ENCODE measurements at regions of chr6 and their contacts with region 1.

Region 1: DNA sequence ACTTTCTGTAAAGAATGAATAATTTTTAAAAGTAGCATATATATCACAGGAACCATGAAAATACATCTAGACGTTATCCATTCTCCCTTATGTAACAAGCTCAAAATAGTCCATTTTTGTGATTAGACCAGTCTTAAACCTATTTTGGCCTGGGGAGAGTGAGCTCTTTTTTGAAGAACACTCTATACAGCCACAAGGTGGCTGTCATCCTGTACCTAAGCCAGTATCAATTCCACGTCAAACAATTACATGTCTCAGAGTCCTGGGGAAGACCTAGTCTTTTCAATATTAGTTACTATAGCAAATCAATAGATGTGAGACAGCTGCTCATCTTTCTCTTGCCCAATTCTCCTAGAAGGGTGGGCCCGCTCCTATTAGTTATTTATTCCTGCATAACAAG is 28.4 kb downstream of the FBXO5 start:
- DNase-seq: no peak
- H3K4me3 Mint-ChIP-seq: no peak overlapping the region
- H3K27ac Mint-ChIP-seq: no peak overlapping the region
- H3K4me1 Mint-ChIP-seq: no peaks in the 10 kb centered on the region
- H3K27me3 Mint-ChIP-seq: no peaks in the 10 kb centered on the region
- CTCF ChIP-seq: no peak

Region 2: DNA sequence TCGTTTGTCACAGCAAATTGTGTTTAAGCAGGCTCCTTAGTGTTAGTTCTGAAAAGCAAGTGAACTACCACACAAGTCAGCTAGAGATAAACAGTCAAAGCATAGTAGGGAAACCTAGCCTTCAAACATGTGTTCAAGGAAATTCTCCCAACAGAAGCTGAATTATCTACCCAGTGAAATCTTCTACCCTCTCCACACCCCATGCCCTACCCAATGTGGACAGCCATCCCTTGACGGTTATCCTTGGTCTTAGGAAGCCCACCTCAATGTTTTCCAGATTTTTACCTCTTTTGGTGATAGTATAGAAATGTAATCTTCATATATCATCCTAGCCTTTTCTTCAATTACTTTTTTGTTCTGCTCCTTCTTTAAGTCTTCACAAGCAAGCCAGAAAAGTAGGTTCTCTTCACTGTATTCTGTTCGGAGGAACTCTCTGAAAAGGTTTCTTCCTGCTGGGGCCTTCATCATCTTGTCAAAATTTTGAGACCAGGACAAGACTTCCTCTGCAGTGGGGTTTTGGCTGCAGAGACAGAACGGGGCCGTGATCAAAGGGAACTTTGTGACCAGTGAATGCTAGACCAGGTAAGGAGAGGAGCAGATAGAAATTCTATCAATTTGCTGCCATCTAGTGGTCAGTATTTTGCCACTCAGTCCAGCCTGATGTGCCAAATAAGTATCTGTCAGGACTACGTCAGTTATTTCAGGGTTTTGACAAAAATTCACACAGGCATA is 69.7 kb after region 1 on chr6:
- CTCF ChIA-PET with region 1: no interaction called
- intact Hi-C with region 1: loop called (anchors 2 kb)
- DNase-seq: peak; percentile 36
- H3K4me3 Mint-ChIP-seq: no peak overlapping the region
- H3K27ac Mint-ChIP-seq: no peak overlapping the region
- H3K4me1 Mint-ChIP-seq: no peaks in the 10 kb centered on the region
- H3K27me3 Mint-ChIP-seq: no peaks in the 10 kb centered on the region
- CTCF ChIP-seq: peak; percentile 37

Region 3: DNA sequence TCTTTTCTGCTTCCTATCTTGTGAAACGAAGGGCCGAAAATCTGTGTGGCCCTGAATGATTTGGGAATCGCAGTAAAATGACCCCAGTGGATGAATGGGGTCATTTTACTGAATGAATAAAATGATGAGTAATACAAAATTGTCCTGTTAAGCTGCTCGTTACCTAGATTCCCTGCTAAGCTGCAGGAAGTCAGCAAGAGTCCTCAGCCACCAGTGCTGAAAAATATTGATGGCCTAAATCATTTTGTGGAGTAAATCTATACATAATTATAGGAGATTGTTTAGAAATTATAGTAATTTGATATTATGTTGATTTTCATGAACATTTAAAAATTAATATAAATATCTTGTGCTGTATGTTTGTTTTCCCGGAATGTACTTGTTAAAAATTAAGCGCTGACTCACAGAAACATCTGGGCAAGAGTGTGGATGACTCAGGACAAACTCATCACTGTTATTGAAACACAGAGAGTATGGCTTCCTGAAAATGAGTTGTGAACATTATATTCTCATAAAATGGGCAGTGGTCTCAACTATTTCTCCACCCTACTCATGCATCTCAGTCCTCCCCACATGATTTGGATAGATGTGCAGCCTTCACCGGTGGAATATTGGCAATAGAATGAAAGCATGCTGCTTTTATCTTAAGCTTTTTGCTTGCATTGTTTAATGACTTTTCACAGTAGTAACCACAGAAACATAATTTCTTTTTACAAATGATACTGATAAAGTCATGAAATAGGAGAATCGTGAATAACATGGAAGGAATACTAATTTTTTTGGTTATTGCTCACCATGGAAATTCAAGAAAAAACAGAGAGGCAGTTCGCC is 212.8 kb after region 1 on chr6:
- CTCF ChIA-PET with region 1: no interaction called
- intact Hi-C with region 1: no loop called
- DNase-seq: no peak
- H3K4me3 Mint-ChIP-seq: peak overlapping the region; percentile 45
- H3K27ac Mint-ChIP-seq: peak overlapping the region; percentile 73
- H3K4me1 Mint-ChIP-seq: peaks cover 20% of the 10 kb centered on the region
- H3K27me3 Mint-ChIP-seq: no peaks in the 10 kb centered on the region
- CTCF ChIP-seq: no peak